Activated CD8-positive, alpha-beta memory T cell treated with anti-CD3 and anti-CD28 coated beads, Interleukin-2, amount 10 ng/mL, durations not matched to agents 7 days and 5 days (primary cell): ENCODE measurements at regions of chr10 and their contacts with region 1.

Region 1: GRCh38 chr10:73879296-73880173 is 5.2 kb upstream of the CAMK2G start:
- DNase-seq: peak; percentile 96
- ATAC-seq: peak; percentile 98
- H3K4me3 Mint-ChIP-seq: peak overlapping the region; percentile 5
- H3K27ac Mint-ChIP-seq: peak overlapping the region; percentile 66
- H3K4me1 Mint-ChIP-seq: peaks cover 37% of the 10 kb centered on the region
- H3K27me3 Mint-ChIP-seq: peaks cover 15% of the 10 kb centered on the region

Region 2: DNA sequence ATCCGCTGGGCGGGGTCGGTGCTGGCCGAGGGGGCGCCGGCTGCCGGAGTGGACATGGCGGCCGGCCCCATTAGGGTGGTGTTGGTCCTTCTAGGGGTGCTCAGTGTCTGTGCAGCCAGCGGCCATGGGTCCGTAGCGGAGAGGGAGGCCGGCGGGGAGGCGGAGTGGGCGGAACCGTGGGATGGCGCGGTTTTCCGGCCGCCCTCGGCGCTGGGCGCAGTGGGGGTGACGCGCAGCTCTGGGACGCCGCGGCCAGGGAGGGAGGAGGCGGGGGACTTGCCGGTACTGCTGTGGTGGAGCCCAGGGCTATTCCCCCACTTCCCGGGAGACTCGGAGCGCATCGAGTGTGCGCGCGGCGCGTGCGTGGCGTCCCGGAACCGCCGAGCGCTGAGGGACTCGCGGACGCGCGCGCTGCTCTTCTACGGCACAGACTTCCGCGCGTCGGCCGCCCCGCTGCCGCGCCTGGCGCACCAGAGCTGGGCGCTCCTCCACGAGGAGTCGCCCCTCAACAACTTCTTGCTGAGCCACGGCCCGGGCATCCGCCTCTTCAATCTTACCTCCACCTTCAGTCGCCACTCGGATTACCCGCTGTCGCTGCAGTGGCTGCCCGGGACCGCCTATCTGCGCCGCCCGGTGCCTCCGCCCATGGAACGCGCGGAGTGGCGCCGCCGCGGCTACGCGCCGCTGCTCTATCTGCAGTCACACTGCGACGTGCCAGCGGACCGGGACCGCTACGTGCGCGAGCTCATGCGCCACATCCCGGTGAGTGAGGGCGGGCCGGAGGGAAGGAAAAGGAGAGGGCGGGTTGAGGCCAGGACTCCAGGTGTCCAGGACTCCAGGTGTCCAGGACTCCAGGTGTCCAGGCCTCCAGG is 107.0 kb before region 1 on chr10:
- CTCF ChIA-PET with region 1: interaction called, 20 read pairs
- DNase-seq: peak; percentile 89
- ATAC-seq: peak; percentile 74
- H3K4me3 Mint-ChIP-seq: peak overlapping the region; percentile 94
- H3K27ac Mint-ChIP-seq: peak overlapping the region; percentile 92
- H3K4me1 Mint-ChIP-seq: peaks cover 46% of the 10 kb centered on the region
- H3K27me3 Mint-ChIP-seq: no peaks in the 10 kb centered on the region

Region 3: GRCh38 chr10:73848821-73849489 is 30.6 kb before region 1 on chr10:
- CTCF ChIA-PET with region 1: interaction called, 411 read pairs
- DNase-seq: peak; percentile 96
- ATAC-seq: peak; percentile 98
- H3K4me3 Mint-ChIP-seq: peak overlapping the region; percentile 48
- H3K27ac Mint-ChIP-seq: peak overlapping the region; percentile 78
- H3K4me1 Mint-ChIP-seq: peaks cover 15% of the 10 kb centered on the region
- H3K27me3 Mint-ChIP-seq: no peaks in the 10 kb centered on the region

Region 4: GRCh38 chr10:73865459-73866442 is 13.8 kb before region 1 on chr10:
- CTCF ChIA-PET with region 1: interaction called, 84 read pairs
- DNase-seq: peak; percentile 79
- ATAC-seq: peak; percentile 88
- H3K4me3 Mint-ChIP-seq: peak overlapping the region; percentile 60
- H3K27ac Mint-ChIP-seq: peak overlapping the region; percentile 95
- H3K4me1 Mint-ChIP-seq: peaks cover 82% of the 10 kb centered on the region
- H3K27me3 Mint-ChIP-seq: no peaks in the 10 kb centered on the region

Region 5: DNA sequence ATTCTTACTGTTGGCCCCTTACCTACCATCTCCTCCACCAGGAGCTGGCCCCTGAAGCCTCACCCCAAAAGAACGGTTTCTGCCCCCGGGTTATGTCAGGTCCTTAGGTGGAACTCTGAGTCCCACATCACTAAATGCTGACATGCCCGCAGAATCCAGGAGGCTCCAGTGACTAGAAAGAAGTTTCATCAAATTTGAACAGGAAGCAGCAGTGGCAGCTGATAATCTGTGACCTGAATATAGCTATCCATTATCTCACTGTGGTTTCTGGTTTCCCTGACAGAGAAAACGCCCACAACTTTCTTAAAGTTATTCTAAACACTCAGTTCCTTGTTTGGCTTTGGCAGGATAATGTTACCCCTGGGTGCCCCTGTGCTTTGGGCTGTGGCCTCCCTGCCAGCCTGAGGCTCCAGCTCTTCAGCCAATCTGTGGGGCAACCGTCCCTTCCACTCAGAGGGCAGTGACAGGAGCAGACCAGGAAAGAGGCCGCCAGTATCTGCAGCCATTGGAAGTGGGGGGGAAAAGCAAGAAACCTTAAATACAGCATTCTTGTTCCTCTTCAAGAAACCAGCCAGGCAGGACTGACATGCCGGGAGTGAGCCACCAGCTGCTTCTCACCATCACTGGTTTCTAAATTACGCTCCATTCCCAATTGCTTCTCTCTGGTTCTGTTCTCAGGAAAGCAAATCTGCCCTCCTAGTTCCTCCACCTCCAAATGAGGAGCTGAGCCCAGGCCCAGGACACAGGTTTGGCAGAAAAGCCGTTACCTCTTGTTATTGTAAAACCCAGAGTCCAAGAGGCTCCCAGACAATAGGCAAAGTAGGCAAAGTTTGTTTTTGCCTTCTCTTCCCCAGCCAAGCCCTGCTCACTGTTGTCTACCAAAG is 77.2 kb after region 1 on chr10:
- CTCF ChIA-PET with region 1: interaction called, 17 read pairs
- DNase-seq: peak; percentile 57
- ATAC-seq: peak; percentile 77
- H3K4me3 Mint-ChIP-seq: peak overlapping the region; percentile 31
- H3K27ac Mint-ChIP-seq: peak overlapping the region; percentile 90
- H3K4me1 Mint-ChIP-seq: peaks cover 48% of the 10 kb centered on the region
- H3K27me3 Mint-ChIP-seq: peaks cover 2% of the 10 kb centered on the region

Region 6: GRCh38 chr10:74103560-74104248 is 224.2 kb after region 1 on chr10:
- CTCF ChIA-PET with region 1: interaction called, 13 read pairs
- DNase-seq: no peak
- ATAC-seq: peak; percentile 42
- H3K4me3 Mint-ChIP-seq: no peak overlapping the region
- H3K27ac Mint-ChIP-seq: no peak overlapping the region
- H3K4me1 Mint-ChIP-seq: peaks cover 3% of the 10 kb centered on the region
- H3K27me3 Mint-ChIP-seq: no peaks in the 10 kb centered on the region